ENCODE measurements at regions of chr12 and their contacts with region 1.

Region 1: DNA sequence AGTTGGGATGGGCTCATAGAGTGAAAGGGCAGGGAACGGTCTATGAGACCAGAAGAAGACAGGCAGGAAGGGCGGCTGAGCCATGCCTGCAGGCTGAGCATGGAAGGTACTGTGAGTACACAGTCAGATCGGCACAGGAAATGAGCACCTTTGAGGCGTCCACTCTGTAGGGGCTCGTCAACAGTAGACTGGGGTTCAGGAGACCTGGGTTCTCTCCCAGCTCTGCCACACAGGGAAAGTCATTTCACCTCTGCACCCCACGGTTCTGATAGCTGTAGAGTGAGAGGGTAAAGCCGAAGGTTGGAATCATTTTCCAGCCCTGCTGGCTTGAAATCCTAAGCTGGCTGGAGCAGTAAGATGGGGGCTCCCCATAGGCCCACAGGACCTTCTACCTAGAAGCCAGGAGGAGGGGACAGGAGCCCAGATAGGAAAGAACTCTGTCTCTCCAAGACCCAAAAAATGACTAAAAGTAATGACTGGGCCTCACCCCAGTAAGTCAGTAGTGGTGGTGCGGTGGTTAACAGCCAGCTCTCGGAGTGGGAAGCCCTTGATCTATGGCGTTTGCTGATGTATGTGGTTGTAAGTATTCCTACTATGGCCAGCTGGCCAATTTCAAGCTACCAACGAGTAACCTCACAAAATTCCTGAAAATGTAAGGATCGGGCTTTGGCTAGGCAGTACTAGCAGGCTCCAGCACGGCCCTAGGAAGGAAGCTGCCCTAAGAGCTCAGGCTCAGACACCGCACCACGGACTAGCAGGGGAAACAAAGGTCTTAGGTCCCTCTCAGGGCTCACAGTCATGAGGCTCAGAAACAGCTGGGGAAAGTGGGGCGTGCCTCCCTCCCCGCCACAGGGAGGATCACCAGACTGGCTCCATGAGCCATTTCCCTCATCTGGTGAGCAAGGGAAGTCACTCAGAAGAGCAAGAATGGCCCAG is 10.3 kb upstream of the CD27 start:
- DNase-seq: no peak
- ATAC-seq: peak; percentile 70
- H3K4me3 ChIP-seq: no peak overlapping the region
- H3K27ac ChIP-seq: peak overlapping the region; percentile 85
- H3K4me1 ChIP-seq: peaks cover 53% of the 10 kb centered on the region
- H3K27me3 ChIP-seq: no peaks in the 10 kb centered on the region
- CTCF ChIP-seq: no peak
- EP300 ChIP-seq: no peak
- POLR2A ChIP-seq: peak; percentile 56
- RAD21 ChIP-seq: no peak

Region 2: GRCh38 chr12:6451348-6452244 is 17.1 kb after region 1 on chr12 and contains the start of gene TAPBPL:
- CTCF ChIA-PET with region 1: interaction called, 55 read pairs
- POLR2A ChIA-PET with region 1: interaction called, 384 read pairs
- RAD21 ChIA-PET with region 1: interaction called, 73 read pairs
- SMC1A ChIA-PET with region 1: interaction called, 74 read pairs
- in situ Hi-C with region 1: no loop called
- intact Hi-C with region 1: no loop called
- DNase-seq: peak; percentile 75
- ATAC-seq: peak; percentile 84
- H3K4me3 ChIP-seq: peak within 1 kb of the TSS; percentile 83
- H3K27ac ChIP-seq: peak within 1 kb of the TSS; percentile 98
- H3K4me1 ChIP-seq: peaks cover 38% of the 10 kb centered on the region
- H3K27me3 ChIP-seq: no peaks in the 10 kb centered on the region
- CTCF ChIP-seq: no peak
- EP300 ChIP-seq: peak; percentile 18 to 46; a peak in 1 of 4 replicates
- POLR2A ChIP-seq: peak; percentile 82
- RAD21 ChIP-seq: no peak
- polyA plus RNA-seq, gene TAPBPL: 12.4 to 20.9 TPM

Measured in GM12878 (cell line).